ENCODE measurements at regions of chr3 and their contacts with region 1.

Region 1: DNA sequence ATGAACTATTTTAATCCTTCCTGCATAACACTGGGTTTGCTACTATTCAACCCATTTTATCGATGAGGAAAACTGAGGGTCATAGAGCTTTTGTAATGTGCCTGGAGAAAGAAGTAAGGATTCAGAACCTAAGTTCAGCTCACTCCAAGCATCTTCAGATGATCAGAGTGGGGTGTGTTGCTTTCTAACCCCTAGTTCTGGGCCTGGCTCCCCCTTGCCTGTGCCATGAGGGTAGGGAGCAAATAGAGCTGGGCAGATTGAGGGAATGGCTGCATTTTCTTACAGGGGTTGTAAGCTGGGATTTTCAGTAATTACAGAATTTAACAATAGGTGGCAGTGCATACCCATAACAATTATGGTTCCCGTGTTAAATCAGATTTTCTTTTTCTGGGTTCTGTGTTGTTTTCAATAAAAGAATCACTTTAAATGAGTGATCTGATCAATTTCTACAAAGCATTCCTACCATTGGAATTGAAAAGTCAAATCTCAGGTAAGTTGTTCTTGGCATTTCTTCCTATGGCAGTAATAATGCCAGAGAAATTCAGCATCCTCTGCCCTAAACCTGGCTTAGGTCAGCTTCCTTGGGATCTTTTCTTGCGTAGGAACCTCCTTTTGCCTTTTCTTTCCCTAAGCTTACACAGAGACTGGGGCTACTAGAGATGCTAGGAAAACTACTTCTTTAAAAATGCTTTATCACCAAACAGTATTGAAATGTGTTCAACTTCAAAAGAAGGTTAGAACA is 103.8 kb upstream of the IL12A start:
- DNase-seq: peak; percentile 44
- H3K27ac ChIP-seq: no peak overlapping the region
- CTCF ChIP-seq: peak; percentile 59

Region 2: DNA sequence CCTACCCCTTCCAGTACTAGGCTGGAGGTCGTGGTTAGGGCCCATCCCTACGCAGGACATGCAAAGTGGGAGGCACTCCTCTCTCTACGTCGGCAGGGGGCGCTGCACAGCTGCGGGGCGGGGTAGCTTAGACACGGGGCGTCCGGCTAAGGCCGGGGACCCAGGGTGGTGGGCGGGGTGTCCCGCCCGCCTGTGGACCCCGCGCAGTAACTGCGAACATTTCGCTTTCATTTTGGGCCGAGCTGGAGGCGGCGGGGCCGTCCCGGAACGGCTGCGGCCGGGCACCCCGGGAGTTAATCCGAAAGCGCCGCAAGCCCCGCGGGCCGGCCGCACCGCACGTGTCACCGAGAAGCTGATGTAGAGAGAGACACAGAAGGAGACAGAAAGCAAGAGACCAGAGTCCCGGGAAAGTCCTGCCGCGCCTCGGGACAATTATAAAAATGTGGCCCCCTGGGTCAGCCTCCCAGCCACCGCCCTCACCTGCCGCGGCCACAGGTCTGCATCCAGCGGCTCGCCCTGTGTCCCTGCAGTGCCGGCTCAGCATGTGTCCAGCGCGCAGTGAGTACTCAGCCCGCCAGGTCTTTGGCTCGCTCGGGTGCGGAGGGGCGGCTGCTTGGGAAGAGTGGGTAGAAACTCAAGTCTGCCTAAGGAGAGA is 103.9 kb after region 1 on chr3 and contains the start of gene IL12A:
- CTCF ChIA-PET with region 1: interaction called, 10 read pairs
- POLR2A ChIA-PET with region 1: no interaction called
- DNase-seq: peak; percentile 56
- H3K27ac ChIP-seq: peak within 1 kb of the TSS; percentile 7; the same call in 1 of the 2 replicates
- CTCF ChIP-seq: peak; percentile 93

Region 3: GRCh38 chr3:160003520-160004128 is 118.8 kb after region 1 on chr3:
- CTCF ChIA-PET with region 1: interaction called, 12 read pairs
- POLR2A ChIA-PET with region 1: no interaction called
- DNase-seq: peak; percentile 55
- H3K27ac ChIP-seq: no peak overlapping the region
- CTCF ChIP-seq: peak; percentile 60

Measured in RWPE1 (cell line).